Natural killer cell (primary cell): ENCODE measurements at regions of chr2 and their contacts with region 1.

Region 1: GRCh38 chr2:159146996-159147666 is 139.4 kb downstream of the WDSUB1 start:
- DNase-seq: no peak
- ATAC-seq: no peak
- H3K4me3 ChIP-seq: no peak overlapping the region
- H3K4me3 Mint-ChIP-seq: no peak overlapping the region
- H3K27ac ChIP-seq: no peak overlapping the region
- H3K27ac Mint-ChIP-seq: no peak overlapping the region
- H3K4me1 ChIP-seq: peaks cover 44% of the 10 kb centered on the region
- H3K4me1 Mint-ChIP-seq: peaks cover 34 to 52% of the 10 kb centered on the region in 2 donors
- H3K27me3 ChIP-seq: no peaks in the 10 kb centered on the region
- H3K27me3 Mint-ChIP-seq: no peaks in the 10 kb centered on the region
- CTCF ChIP-seq: no peak

Region 2: GRCh38 chr2:158473719-158474392 is 673.3 kb before region 1 on chr2:
- intact Hi-C with region 1: no loop called
- DNase-seq: no peak
- ATAC-seq: no peak
- H3K4me3 ChIP-seq: no peak overlapping the region
- H3K4me3 Mint-ChIP-seq: no peak overlapping the region
- H3K27ac ChIP-seq: no peak overlapping the region
- H3K27ac Mint-ChIP-seq: no peak overlapping the region
- H3K4me1 ChIP-seq: peaks cover 3% of the 10 kb centered on the region
- H3K4me1 Mint-ChIP-seq: peaks cover 9% of the 10 kb centered on the region in 2 donors
- H3K27me3 ChIP-seq: no peaks in the 10 kb centered on the region
- H3K27me3 Mint-ChIP-seq: no peaks in the 10 kb centered on the region
- CTCF ChIP-seq: no peak

Region 3: DNA sequence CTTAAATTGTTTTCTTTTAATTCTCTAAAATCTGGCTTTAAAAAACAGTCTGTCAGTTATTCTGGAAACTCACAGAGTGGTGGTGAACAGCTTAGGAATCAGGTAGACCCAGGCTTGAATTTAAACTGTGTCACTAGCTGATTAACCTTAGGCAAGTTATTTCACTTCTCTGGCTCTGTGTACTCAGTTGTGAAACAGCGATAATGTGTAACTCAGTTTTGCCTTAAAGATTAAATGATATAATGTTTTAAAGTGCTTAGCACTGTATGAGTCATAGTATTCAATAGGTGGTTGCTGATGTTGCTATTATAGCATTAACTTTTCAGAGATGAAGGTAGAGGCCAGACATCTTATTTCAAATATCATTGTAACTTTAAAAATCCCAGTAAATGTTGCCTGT is 649.6 kb before region 1 on chr2:
- intact Hi-C with region 1: no loop called
- DNase-seq: no peak
- ATAC-seq: no peak
- H3K4me3 ChIP-seq: no peak overlapping the region
- H3K4me3 Mint-ChIP-seq: no peak overlapping the region
- H3K27ac ChIP-seq: no peak overlapping the region
- H3K27ac Mint-ChIP-seq: no peak overlapping the region
- H3K4me1 ChIP-seq: no peaks in the 10 kb centered on the region
- H3K4me1 Mint-ChIP-seq: no peaks in the 10 kb centered on the region
- H3K27me3 ChIP-seq: no peaks in the 10 kb centered on the region
- H3K27me3 Mint-ChIP-seq: no peaks in the 10 kb centered on the region
- CTCF ChIP-seq: no peak

Region 4: GRCh38 chr2:159026170-159026569 is 121.0 kb before region 1 on chr2:
- intact Hi-C with region 1: no loop called
- DNase-seq: no peak
- ATAC-seq: no peak
- H3K4me3 ChIP-seq: no peak overlapping the region
- H3K4me3 Mint-ChIP-seq: no peak overlapping the region
- H3K27ac ChIP-seq: no peak overlapping the region
- H3K27ac Mint-ChIP-seq: no peak overlapping the region
- H3K4me1 ChIP-seq: no peaks in the 10 kb centered on the region
- H3K4me1 Mint-ChIP-seq: no peaks in the 10 kb centered on the region
- H3K27me3 ChIP-seq: no peaks in the 10 kb centered on the region
- H3K27me3 Mint-ChIP-seq: peaks cover 0 to 8% of the 10 kb centered on the region in 2 donors
- CTCF ChIP-seq: no peak

Region 5: DNA sequence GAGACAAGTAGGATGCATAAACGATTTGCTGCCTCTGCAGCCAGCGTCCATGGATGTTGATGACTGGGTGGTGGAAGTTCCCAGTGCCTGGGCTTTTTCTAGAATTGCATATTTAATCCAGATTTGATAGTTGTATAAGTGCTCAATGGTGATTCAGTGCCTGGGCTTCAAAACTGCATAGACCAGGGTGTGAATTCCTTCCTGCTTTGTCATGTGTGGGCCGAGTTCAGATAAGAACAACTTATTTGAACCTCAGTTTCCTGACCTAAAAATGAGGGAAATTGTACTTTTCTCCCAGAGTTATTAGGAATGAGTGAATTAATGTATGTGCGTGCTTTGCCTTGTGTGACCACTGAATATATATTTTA is 15.2 kb before region 1 on chr2:
- intact Hi-C with region 1: loop called (anchors 1 kb)
- DNase-seq: no peak
- ATAC-seq: peak in 2 of 3 donors; percentile 28 to 49
- H3K4me3 ChIP-seq: no peak overlapping the region
- H3K4me3 Mint-ChIP-seq: peak overlapping the region; percentile 73
- H3K27ac ChIP-seq: no peak overlapping the region
- H3K27ac Mint-ChIP-seq: peak overlapping the region in 1 of 2 donors; percentile 85
- H3K4me1 ChIP-seq: peaks cover 39% of the 10 kb centered on the region
- H3K4me1 Mint-ChIP-seq: peaks cover 58 to 59% of the 10 kb centered on the region in 2 donors
- H3K27me3 ChIP-seq: no peaks in the 10 kb centered on the region
- H3K27me3 Mint-ChIP-seq: peaks cover 0 to 1% of the 10 kb centered on the region in 2 donors
- CTCF ChIP-seq: no peak

Region 6: GRCh38 chr2:159201360-159202063 is 54.4 kb after region 1 on chr2:
- intact Hi-C with region 1: loop called (anchors 1 kb)
- DNase-seq: peak; percentile 45 to 68
- ATAC-seq: peak; percentile 69 to 79 (median 78)
- H3K4me3 ChIP-seq: no peak overlapping the region
- H3K4me3 Mint-ChIP-seq: peak overlapping the region; percentile 53
- H3K27ac ChIP-seq: peak overlapping the region; percentile 59
- H3K27ac Mint-ChIP-seq: peak overlapping the region; percentile 41 to 91
- H3K4me1 ChIP-seq: peaks cover 51% of the 10 kb centered on the region
- H3K4me1 Mint-ChIP-seq: peaks cover 51 to 55% of the 10 kb centered on the region in 2 donors
- H3K27me3 ChIP-seq: no peaks in the 10 kb centered on the region
- H3K27me3 Mint-ChIP-seq: no peaks in the 10 kb centered on the region
- CTCF ChIP-seq: no peak

Region 7: GRCh38 chr2:159226059-159226461 is 78.9 kb after region 1 on chr2:
- intact Hi-C with region 1: loop called (anchors 1 kb)
- DNase-seq: peak; percentile 47 to 58
- ATAC-seq: peak; percentile 84 to 87 (median 84)
- H3K4me3 ChIP-seq: no peak overlapping the region
- H3K4me3 Mint-ChIP-seq: peak overlapping the region; percentile 78
- H3K27ac ChIP-seq: peak overlapping the region; percentile 1
- H3K27ac Mint-ChIP-seq: peak overlapping the region; percentile 76 to 81
- H3K4me1 ChIP-seq: peaks cover 62% of the 10 kb centered on the region
- H3K4me1 Mint-ChIP-seq: peaks cover 66% of the 10 kb centered on the region in 2 donors
- H3K27me3 ChIP-seq: no peaks in the 10 kb centered on the region
- H3K27me3 Mint-ChIP-seq: no peaks in the 10 kb centered on the region
- CTCF ChIP-seq: no peak

Region 8: GRCh38 chr2:159275111-159275510 is 128.0 kb after region 1 on chr2:
- intact Hi-C with region 1: loop called (anchors 2 kb)
- DNase-seq: no peak
- ATAC-seq: peak; percentile 70 to 97 (median 93)
- H3K4me3 ChIP-seq: no peak overlapping the region
- H3K4me3 Mint-ChIP-seq: peak overlapping the region; percentile 35
- H3K27ac ChIP-seq: no peak overlapping the region
- H3K27ac Mint-ChIP-seq: peak overlapping the region; percentile 24 to 47
- H3K4me1 ChIP-seq: peaks cover 3% of the 10 kb centered on the region
- H3K4me1 Mint-ChIP-seq: peaks cover 15 to 18% of the 10 kb centered on the region in 2 donors
- H3K27me3 ChIP-seq: no peaks in the 10 kb centered on the region
- H3K27me3 Mint-ChIP-seq: no peaks in the 10 kb centered on the region
- CTCF ChIP-seq: no peak

Region 9: GRCh38 chr2:159712143-159712928 is 565.2 kb after region 1 on chr2 and contains the start of gene MARCHF7:
- intact Hi-C with region 1: loop called (anchors 10 kb)
- DNase-seq: peak; percentile 96 to 97
- ATAC-seq: peak; percentile 91 to 97 (median 92)
- H3K4me3 ChIP-seq: peak within 1 kb of the TSS; percentile 89
- H3K4me3 Mint-ChIP-seq: peak within 1 kb of the TSS; percentile 99
- H3K27ac ChIP-seq: peak within 1 kb of the TSS; percentile 95
- H3K27ac Mint-ChIP-seq: peak within 1 kb of the TSS; percentile 97 to 100
- H3K4me1 ChIP-seq: peaks cover 29% of the 10 kb centered on the region
- H3K4me1 Mint-ChIP-seq: peaks cover 48 to 51% of the 10 kb centered on the region in 2 donors
- H3K27me3 ChIP-seq: no peaks in the 10 kb centered on the region
- H3K27me3 Mint-ChIP-seq: no peaks in the 10 kb centered on the region
- CTCF ChIP-seq: peak; percentile 14
- total RNA-seq, gene MARCHF7: 60.5 to 96.5 (median 66.8) TPM